MCF 10A (cell line): ENCODE measurements at regions of chr12 and their contacts with region 1.

Region 1: GRCh38 chr12:91926848-91927247 is 218.8 kb downstream of the BTG1 start:
- DNase-seq: peak; percentile 57
- H3K4me3 Mint-ChIP-seq: no peak overlapping the region
- H3K27ac Mint-ChIP-seq: peak overlapping the region; percentile 75
- H3K4me1 Mint-ChIP-seq: peaks cover 18% of the 10 kb centered on the region
- H3K27me3 Mint-ChIP-seq: no peaks in the 10 kb centered on the region
- CTCF ChIP-seq: no peak

Region 2: DNA sequence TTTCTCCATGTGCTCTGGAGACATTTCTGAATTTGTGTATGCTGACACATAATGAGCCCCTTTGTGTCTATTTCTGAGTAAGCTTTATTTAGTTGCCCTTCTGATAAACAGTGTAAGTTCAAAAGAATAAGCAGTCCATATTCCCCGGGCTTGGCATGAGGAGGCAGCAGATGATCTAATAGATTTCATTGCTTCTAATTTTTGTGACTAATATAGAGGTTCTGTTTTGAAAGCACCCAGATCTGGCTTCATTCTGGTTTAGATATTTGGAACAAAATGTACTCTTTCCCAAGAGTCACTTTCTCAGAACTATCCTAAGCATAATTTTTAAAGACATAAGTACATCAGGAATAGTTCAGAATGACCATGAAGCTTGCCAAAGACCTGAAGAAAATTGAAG is 72.1 kb before region 1 on chr12:
- CTCF ChIA-PET with region 1: interaction called, 6 read pairs
- POLR2A ChIA-PET with region 1: interaction called, 19 read pairs
- intact Hi-C with region 1: no loop called
- DNase-seq: peak; percentile 26
- H3K4me3 Mint-ChIP-seq: peak overlapping the region; percentile 13
- H3K27ac Mint-ChIP-seq: peak overlapping the region; percentile 93
- H3K4me1 Mint-ChIP-seq: peaks cover 41% of the 10 kb centered on the region
- H3K27me3 Mint-ChIP-seq: no peaks in the 10 kb centered on the region
- CTCF ChIP-seq: no peak

Region 3: GRCh38 chr12:91978143-91978542 is 51.3 kb after region 1 on chr12:
- CTCF ChIA-PET with region 1: no interaction called
- POLR2A ChIA-PET with region 1: no interaction called
- intact Hi-C with region 1: no loop called
- DNase-seq: no peak
- H3K4me3 Mint-ChIP-seq: no peak overlapping the region
- H3K27ac Mint-ChIP-seq: no peak overlapping the region
- H3K4me1 Mint-ChIP-seq: no peaks in the 10 kb centered on the region
- H3K27me3 Mint-ChIP-seq: no peaks in the 10 kb centered on the region
- CTCF ChIP-seq: no peak

Region 4: DNA sequence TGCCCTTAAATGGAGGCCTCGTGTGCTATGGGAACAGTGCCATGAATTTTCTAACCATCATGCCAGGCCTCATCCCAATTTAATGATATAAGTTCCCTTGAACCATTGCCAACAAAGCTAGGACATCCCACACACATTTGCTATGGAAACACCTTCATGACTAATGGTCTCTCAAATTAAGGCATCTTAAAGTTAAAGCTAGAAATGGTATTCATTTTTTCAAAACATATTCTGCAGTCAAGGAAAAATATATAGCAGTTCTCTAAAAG is 101.5 kb after region 1 on chr12:
- CTCF ChIA-PET with region 1: no interaction called
- POLR2A ChIA-PET with region 1: interaction called, 19 read pairs
- intact Hi-C with region 1: no loop called
- DNase-seq: peak; percentile 85
- H3K4me3 Mint-ChIP-seq: no peak overlapping the region
- H3K27ac Mint-ChIP-seq: peak overlapping the region; percentile 65
- H3K4me1 Mint-ChIP-seq: peaks cover 49% of the 10 kb centered on the region
- H3K27me3 Mint-ChIP-seq: no peaks in the 10 kb centered on the region
- CTCF ChIP-seq: no peak